ENCODE measurements at regions of chr1 and their contacts with region 1.

Region 1: DNA sequence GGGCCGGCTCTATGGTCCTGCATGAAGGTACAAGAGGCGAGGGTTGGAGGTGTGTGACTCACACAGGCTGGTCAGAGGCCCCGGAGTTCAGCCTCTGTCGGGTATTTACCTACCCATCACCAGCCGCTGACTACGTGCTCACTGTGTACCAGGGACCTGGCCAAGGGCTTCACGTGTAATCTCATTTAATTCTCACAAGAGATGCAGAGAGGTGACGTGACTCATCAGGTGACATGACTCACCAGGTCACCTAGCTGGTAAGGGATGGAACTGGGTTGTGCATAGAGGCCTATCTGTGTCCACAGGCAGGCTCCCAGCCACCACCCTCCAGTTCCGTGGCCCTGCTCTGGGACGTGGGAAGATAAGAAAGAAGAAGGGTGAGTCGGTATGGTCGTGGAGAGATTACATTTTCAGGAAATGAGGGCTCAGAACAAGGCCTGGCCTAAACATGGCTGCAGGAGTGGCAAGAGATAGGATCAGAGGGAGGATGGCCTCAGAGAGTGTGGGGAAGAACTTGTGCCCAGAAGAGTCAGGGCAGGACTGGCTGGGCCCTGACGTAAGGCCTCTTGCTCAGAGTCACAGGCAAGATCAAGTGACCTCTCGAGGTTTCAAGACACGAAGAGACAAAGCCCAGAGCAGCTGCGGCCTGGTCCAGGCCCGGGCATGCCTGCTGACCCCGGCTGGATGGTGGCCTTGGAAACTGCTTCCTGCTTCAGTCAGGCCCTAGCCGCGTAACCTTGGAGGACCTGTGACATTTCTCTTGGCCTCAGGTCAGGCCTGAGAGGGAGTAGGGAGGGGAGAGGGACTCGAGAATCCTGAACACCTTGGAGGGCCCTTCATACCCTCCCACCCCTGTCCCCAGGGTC is 52.7 kb upstream of the WASF2 start:
- DNase-seq: no peak
- H3K4me3 ChIP-seq: no peak overlapping the region
- H3K27ac ChIP-seq: peak overlapping the region; percentile 79 to 91
- H3K4me1 ChIP-seq: peaks cover 41 to 66% of the 10 kb centered on the region in 2 donors
- H3K27me3 ChIP-seq: no peaks in the 10 kb centered on the region
- CTCF ChIP-seq: no peak

Region 2: DNA sequence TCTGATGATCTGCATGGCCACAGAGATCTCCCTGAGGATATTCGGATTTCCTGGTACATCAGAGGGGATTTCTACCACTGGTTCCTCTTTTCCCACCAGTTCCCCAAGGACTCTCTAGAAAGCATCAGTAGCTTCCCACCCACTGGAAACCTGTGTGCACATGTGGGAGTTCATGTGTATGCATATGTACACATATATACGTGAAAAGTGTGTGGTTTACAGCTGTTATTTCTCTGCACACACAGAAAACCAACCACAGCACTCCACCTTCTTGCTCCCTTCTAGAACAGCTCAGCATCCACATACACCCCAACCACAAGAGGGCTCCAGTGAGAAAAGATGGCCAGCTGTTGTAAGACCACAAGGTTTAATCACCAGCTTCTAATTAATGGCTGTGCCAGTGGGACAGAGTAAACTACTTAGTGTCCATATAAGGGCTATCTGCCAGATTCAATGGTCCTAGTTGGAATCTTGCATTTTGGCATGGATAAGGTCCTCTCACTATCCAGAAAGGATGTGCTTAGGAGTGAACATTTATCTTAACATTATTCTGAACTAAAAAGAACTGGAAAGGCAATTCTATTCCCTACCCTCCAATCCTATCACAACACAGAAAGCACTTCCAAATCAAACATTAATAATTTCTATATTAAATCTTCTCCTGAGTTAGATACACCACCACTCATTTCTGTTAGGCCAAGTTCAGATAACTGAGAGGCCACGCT is 126.1 kb before region 1 on chr1:
- intact Hi-C with region 1: loop called (anchors 5 kb)
- DNase-seq: no peak
- H3K4me3 ChIP-seq: no peak overlapping the region
- H3K27ac ChIP-seq: no peak overlapping the region
- H3K4me1 ChIP-seq: peaks cover 4 to 33% of the 10 kb centered on the region in 2 donors
- H3K27me3 ChIP-seq: no peaks in the 10 kb centered on the region
- CTCF ChIP-seq: peak in 2 of 3 experiments; percentile 33 to 51

Region 3: GRCh38 chr1:27430903-27431600 is 111.6 kb before region 1 on chr1:
- intact Hi-C with region 1: loop called (anchors 5 kb)
- DNase-seq: peak in 1 of 2 donors; percentile 67
- H3K4me3 ChIP-seq: peak overlapping the region in 1 of 2 donors; percentile 11
- H3K27ac ChIP-seq: peak overlapping the region; percentile 74 to 78
- H3K4me1 ChIP-seq: peaks cover 38 to 87% of the 10 kb centered on the region in 2 donors
- H3K27me3 ChIP-seq: no peaks in the 10 kb centered on the region
- CTCF ChIP-seq: peak in 1 of 3 experiments; percentile 23

Region 4: GRCh38 chr1:27671964-27672749 is 129.5 kb after region 1 on chr1 and contains the start of gene IFI6:
- intact Hi-C with region 1: no loop called
- DNase-seq: peak; percentile 69 to 94
- H3K4me3 ChIP-seq: peak within 1 kb of the TSS; percentile 49 to 68
- H3K27ac ChIP-seq: peak within 1 kb of the TSS; percentile 84 to 91
- H3K4me1 ChIP-seq: peaks cover 0 to 17% of the 10 kb centered on the region in 2 donors
- H3K27me3 ChIP-seq: no peaks in the 10 kb centered on the region
- CTCF ChIP-seq: peak; percentile 38 to 47 (median 39)
- total RNA-seq, gene IFI6: 238 TPM